ENCODE measurements at regions of chr3 and their contacts with region 1.

Region 1: DNA sequence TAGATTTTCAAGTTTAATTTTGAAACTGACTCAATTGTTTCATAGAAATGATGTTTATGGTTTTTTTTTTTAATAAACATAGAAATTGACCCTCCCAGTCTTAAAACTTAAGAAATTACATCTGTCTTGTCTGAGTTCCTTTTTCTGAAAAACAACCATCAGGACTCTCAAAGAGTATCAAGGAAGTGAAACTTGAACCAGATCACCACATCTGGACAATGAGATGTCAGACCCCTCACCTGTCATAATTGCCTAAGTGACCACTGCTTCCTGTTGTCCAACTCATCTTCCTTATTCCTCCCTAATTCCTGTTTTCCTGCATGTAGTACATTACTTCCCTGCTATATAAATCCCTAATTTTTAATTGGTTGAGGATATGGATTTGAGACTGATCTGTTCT is 441.5 kb upstream of the ARHGEF26 start:
- DNase-seq: no peak
- H3K4me3 ChIP-seq: no peak overlapping the region
- H3K4me3 Mint-ChIP-seq: no peak overlapping the region
- H3K27ac ChIP-seq: no peak overlapping the region
- H3K27ac Mint-ChIP-seq: peak overlapping the region in 1 of 7 donors; percentile 32
- H3K4me1 ChIP-seq: peaks cover 9% of the 10 kb centered on the region
- H3K4me1 Mint-ChIP-seq: peaks cover 6 to 14% (median 9%) of the 10 kb centered on the region in 4 donors
- H3K27me3 ChIP-seq: no peaks in the 10 kb centered on the region
- H3K27me3 Mint-ChIP-seq: no peaks in the 10 kb centered on the region

Region 2: DNA sequence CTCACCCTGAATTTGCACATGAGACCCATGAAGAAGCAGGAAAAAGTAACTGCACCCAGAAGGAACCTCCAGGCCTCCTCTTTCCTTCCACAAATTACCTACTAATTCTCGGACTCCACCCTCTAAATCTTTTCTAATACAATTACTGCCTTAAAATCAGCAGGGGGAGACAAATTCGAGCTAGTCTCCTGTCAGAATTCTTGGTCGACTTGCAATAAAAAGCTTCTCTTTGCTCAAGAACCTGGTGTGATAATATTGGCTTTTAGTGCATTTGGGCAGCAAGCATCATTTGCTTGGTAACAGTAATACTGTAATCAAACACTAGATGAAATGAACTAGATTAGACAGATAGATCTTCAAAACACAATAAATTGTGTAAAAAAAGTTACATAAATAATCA is 235.8 kb before region 1 on chr3:
- CTCF ChIA-PET with region 1: interaction called, 3 read pairs
- POLR2A ChIA-PET with region 1: no interaction called
- intact Hi-C with region 1: loop called (anchors 10 kb)
- DNase-seq: no peak
- H3K4me3 ChIP-seq: no peak overlapping the region
- H3K4me3 Mint-ChIP-seq: no peak overlapping the region
- H3K27ac ChIP-seq: no peak overlapping the region
- H3K27ac Mint-ChIP-seq: no peak overlapping the region
- H3K4me1 ChIP-seq: peaks cover 10% of the 10 kb centered on the region
- H3K4me1 Mint-ChIP-seq: peaks cover 16 to 25% (median 20%) of the 10 kb centered on the region in 4 donors
- H3K27me3 ChIP-seq: no peaks in the 10 kb centered on the region
- H3K27me3 Mint-ChIP-seq: no peaks in the 10 kb centered on the region

Region 3: DNA sequence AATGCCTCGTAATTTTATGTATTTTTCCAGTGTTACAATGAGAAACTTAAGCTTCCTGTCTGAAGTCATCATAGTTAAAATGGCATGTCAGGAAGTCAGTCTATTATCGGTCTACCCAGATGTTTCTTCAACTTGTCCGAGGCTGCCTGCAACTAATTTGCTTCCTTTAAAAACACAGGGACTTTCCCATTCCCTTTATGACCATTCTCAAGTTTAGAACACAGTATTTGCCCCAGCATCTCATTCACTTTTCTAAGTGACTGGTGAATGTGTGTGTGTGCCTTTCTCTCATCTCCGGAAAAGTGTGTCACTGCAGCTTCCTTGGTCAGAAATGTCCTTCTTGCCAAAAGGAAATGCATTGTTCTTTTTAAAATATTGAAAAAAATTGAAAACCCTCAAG is 51.1 kb before region 1 on chr3:
- CTCF ChIA-PET with region 1: interaction called, 3 read pairs
- POLR2A ChIA-PET with region 1: interaction called, 9 read pairs
- intact Hi-C with region 1: loop called (anchors 5 kb)
- DNase-seq: peak in 2 of 5 donors; percentile 8 to 10
- H3K4me3 ChIP-seq: no peak overlapping the region
- H3K4me3 Mint-ChIP-seq: peak overlapping the region; percentile 12 to 82 (median 73)
- H3K27ac ChIP-seq: no peak overlapping the region
- H3K27ac Mint-ChIP-seq: peak overlapping the region; percentile 5 to 86 (median 58)
- H3K4me1 ChIP-seq: peaks cover 70% of the 10 kb centered on the region
- H3K4me1 Mint-ChIP-seq: peaks cover 55 to 81% (median 70%) of the 10 kb centered on the region in 4 donors
- H3K27me3 ChIP-seq: no peaks in the 10 kb centered on the region
- H3K27me3 Mint-ChIP-seq: no peaks in the 10 kb centered on the region

Region 4: DNA sequence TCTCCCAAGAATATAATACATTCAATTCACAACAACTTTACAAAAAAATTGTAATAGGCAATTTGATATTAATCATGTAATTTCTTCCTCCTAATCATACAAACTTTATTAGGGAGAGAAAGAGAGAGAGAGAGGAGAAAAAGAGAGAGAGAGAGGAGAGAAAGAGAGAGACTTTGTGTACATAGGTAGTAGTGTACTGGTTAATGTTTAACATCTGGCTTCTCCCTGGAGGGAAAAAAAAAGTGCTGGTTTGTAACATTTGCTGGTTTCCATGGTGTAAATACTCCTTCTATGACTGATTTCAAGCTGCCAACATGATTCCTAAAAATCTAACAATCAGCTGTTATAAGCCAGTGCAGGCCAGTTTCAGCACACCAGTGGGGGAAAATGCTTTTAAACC is 343.4 kb after region 1 on chr3:
- CTCF ChIA-PET with region 1: no interaction called
- POLR2A ChIA-PET with region 1: no interaction called
- intact Hi-C with region 1: no loop called
- DNase-seq: no peak
- H3K4me3 ChIP-seq: no peak overlapping the region
- H3K4me3 Mint-ChIP-seq: no peak overlapping the region
- H3K27ac ChIP-seq: no peak overlapping the region
- H3K27ac Mint-ChIP-seq: no peak overlapping the region
- H3K4me1 ChIP-seq: no peaks in the 10 kb centered on the region
- H3K4me1 Mint-ChIP-seq: no peaks in the 10 kb centered on the region
- H3K27me3 ChIP-seq: no peaks in the 10 kb centered on the region
- H3K27me3 Mint-ChIP-seq: peaks cover 1 to 5% of the 10 kb centered on the region in 2 donors